ENCODE measurements at regions of chr4 and their contacts with region 1.

Region 1: DNA sequence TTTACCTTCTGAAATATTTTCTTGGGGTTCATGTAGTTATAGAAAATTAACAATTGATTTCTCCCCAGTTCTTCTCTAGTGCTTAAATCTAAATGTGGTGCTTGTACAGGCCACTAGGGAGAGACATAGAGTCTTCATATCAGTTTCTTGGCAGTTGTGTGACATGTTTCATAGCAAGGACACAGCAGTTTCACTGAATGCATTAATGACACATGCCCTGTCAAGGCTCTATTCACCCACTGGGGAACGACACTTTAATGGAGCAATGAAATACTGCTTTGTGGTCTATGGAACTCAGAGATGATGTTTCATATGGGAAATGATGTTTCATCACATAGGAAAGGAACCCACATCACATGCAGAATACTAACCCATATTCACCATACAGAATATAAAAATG is 2.8 kb downstream of the VEGFC start:
- DNase-seq: no peak
- H3K4me3 ChIP-seq: no peak overlapping the region
- H3K27ac ChIP-seq: no peak overlapping the region
- H3K4me1 ChIP-seq: peaks cover 17% of the 10 kb centered on the region
- H3K27me3 ChIP-seq: no peaks in the 10 kb centered on the region
- CTCF ChIP-seq: peak; percentile 67

Region 2: DNA sequence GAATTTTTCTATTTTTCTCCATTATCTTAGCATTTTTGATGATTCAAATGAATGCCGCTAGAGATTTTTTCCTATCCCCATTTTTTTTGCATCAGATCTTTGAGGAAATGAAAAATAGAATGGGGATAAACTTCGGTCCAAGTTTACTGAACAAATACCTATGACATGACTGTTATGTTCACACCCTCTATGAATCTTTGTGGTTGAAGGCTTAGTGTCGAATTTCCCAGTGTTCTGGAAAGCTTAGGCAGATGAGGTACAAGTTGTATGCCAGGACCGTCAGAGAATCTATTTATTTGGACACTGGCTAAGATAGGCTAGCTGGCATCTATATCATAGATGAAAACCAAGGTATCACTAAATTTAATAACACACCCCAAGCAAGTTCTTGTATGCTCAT is 346.8 kb before region 1 on chr4:
- CTCF ChIA-PET with region 1: no interaction called
- POLR2A ChIA-PET with region 1: no interaction called
- intact Hi-C with region 1: loop called (anchors 1 kb)
- DNase-seq: peak; percentile 36 to 53
- H3K4me3 ChIP-seq: no peak overlapping the region
- H3K27ac ChIP-seq: no peak overlapping the region
- H3K4me1 ChIP-seq: peaks cover 12% of the 10 kb centered on the region
- H3K27me3 ChIP-seq: no peaks in the 10 kb centered on the region
- CTCF ChIP-seq: no peak

Region 3: DNA sequence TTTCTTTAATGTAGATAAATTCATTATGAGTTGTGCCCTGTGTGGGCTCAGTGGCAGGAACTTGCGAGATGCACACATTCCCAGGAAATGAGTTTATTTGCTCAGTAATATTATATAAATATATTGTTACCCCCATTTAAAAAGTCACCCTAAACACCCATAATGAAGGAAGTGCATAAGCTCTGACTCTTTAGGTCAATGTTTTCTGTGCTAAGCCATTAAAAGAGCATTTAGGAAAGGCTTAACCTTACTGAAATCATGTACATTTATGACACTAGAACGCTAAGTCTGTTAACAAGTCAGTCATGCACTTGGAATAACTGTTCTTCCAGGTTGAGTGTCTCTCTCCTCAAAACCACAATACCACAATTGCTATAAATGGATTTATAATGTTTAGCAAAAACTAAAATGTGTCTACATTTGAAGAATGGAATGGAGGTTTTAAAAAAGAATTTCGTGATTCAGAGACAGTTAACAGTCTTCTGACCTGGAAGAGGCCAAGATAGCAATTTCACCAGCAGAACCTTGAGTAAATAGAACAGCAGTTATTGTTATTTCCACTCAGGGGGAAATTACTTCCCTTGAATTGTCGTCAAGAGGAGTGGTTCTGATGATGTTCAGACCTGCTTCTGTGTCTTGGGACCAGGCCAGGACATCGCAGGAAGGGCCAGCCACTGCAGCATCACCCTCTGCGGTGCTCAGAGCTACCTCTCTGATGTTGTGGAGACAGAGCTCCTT is 93.9 kb after region 1 on chr4:
- CTCF ChIA-PET with region 1: no interaction called
- POLR2A ChIA-PET with region 1: no interaction called
- intact Hi-C with region 1: loop called (anchors 1 kb)
- DNase-seq: peak in 1 of 2 experiments; percentile 72
- H3K4me3 ChIP-seq: peak overlapping the region; percentile 20; the same call in 1 of the 2 replicates
- H3K27ac ChIP-seq: 0 out of 2 replicates have a peak overlapping the region, but pooled peaks have one; percentile 30
- H3K4me1 ChIP-seq: peaks cover 16% of the 10 kb centered on the region
- H3K27me3 ChIP-seq: no peaks in the 10 kb centered on the region
- CTCF ChIP-seq: no peak

Region 4: GRCh38 chr4:177128306-177128705 is 338.4 kb after region 1 on chr4:
- CTCF ChIA-PET with region 1: no interaction called
- POLR2A ChIA-PET with region 1: no interaction called
- intact Hi-C with region 1: loop called (anchors 5 kb)
- DNase-seq: peak in 1 of 2 experiments; percentile 57
- H3K4me3 ChIP-seq: no peak overlapping the region
- H3K27ac ChIP-seq: peak overlapping the region; percentile 69
- H3K4me1 ChIP-seq: peaks cover 16% of the 10 kb centered on the region
- H3K27me3 ChIP-seq: no peaks in the 10 kb centered on the region
- CTCF ChIP-seq: no peak

Region 5: DNA sequence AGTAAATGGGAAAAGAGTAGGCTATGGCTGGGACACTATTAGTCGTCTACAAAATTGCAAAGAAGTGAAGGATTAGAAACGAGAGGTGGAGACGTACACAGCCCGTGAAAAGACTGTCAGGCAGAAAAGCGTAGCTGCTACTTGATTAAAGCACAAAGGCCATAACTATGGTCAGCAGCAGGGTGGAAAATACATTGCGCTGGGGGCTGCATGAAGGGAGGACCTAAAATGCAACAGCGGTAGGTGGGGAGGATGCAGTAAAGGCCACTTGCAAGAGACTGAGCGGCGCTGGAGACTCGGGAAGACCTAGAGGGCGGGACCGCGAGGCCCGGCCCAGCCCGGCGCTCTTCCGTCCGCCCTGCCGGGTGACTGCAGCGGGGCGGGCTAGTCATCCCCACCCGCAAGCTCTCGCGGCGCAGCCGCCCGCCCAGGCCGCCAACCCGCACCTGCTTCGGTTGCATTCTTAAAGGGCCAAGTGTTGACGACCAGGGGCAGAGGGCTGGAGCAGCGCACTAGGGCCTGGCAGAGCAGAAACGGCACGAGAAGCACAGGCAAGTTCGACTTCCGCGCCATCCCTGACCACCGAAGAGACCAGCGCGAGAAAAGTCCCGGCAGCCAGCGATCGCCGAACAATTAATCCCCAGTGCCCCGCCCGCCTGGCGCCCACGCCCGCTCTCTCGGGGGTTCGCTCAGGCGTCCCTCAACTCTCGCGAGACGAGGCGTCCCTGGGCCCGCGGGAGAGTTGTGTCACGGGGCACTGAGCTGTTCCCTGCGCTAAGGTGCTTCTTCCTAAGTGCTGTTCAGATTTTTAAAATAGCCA is 652.1 kb after region 1 on chr4 and contains the start of gene AGA:
- CTCF ChIA-PET with region 1: no interaction called
- POLR2A ChIA-PET with region 1: no interaction called
- intact Hi-C with region 1: loop called (anchors 2 kb)
- DNase-seq: peak; percentile 71 to 92
- H3K4me3 ChIP-seq: peak within 1 kb of the TSS; percentile 91
- H3K27ac ChIP-seq: peak within 1 kb of the TSS; percentile 92
- H3K4me1 ChIP-seq: peaks cover 16% of the 10 kb centered on the region
- H3K27me3 ChIP-seq: no peaks in the 10 kb centered on the region
- CTCF ChIP-seq: no peak
- total RNA-seq, gene AGA: 13.8 and 17.0 TPM in 2 replicates

Measured in PC-9 (cell line).